ENCODE measurements at regions of chr5 and their contacts with region 1.

Region 1: GRCh38 chr5:180209137-180209581 is at the start of gene RASGEF1C:
- DNase-seq: peak; percentile 86
- H3K4me3 Mint-ChIP-seq: peak within 1 kb of the TSS; percentile 55
- H3K27ac Mint-ChIP-seq: no peak within 1 kb of the TSS
- H3K4me1 Mint-ChIP-seq: peaks cover 26% of the 10 kb centered on the region
- H3K27me3 Mint-ChIP-seq: peaks cover 43% of the 10 kb centered on the region
- CTCF ChIP-seq: peak; percentile 40
- total RNA-seq, gene RASGEF1C: not detected in 2 replicates

Region 2: DNA sequence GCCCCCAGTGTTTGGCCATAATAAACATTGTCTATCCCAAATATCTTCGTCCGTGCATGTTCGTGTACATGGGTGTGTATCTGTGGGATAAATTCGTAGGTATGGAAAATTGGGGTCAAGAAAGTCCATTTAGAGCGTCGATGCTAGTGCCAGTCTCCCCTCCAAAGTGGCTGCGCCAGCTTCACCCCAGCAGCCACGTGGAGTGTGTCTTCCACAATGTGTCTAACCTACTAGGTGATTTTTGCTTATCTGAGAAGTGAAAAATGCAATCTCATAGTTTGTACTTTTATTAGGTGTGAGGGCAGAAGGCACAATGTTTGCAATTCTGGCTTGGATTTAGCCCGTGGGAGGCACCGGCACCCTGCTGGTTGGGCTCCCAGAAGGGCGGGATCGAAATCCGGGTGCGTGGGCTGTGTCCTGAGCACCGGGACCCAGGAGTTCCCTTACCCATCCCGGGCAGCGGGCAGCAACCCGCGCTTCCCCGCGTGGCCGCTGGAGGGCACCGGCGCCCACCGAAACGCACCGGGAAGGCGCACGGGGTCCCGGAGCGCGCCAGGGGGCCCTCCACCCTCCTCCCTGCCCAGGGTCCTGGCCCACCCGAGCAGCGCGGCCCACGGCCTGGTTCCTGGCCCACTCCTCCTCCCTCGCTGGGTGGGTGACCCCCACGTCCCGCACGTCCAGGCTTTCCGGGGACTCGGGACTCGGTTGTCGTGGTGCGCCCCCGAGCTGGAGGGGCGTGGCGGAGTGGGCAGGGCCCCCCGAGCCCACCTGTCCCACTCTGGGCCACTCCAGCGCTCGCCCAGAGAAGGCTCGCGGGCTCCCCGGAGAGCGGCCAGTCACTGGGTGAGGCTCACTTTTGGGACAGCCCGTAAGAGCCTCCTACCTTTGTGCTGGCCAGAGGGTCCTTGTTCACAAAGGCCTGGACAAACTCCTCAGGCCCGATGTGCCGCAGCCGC is 82.2 kb before region 1 on chr5:
- CTCF ChIA-PET with region 1: interaction called, 4 read pairs
- intact Hi-C with region 1: loop called (anchors 5 kb)
- DNase-seq: peak; percentile 79
- H3K4me3 Mint-ChIP-seq: no peak overlapping the region
- H3K27ac Mint-ChIP-seq: no peak overlapping the region
- H3K4me1 Mint-ChIP-seq: peaks cover 23% of the 10 kb centered on the region
- H3K27me3 Mint-ChIP-seq: peaks cover 81% of the 10 kb centered on the region
- CTCF ChIP-seq: peak; percentile 93

Region 3: GRCh38 chr5:180470966-180471582 is 261.9 kb after region 1 on chr5:
- CTCF ChIA-PET with region 1: no interaction called
- intact Hi-C with region 1: loop called (anchors 10 kb)
- DNase-seq: peak; percentile 76
- H3K4me3 Mint-ChIP-seq: no peak overlapping the region
- H3K27ac Mint-ChIP-seq: no peak overlapping the region
- H3K4me1 Mint-ChIP-seq: peaks cover 41% of the 10 kb centered on the region
- H3K27me3 Mint-ChIP-seq: no peaks in the 10 kb centered on the region
- CTCF ChIP-seq: peak; percentile 97

Measured in Calu3 (cell line).